ENCODE measurements at regions of chr15 and their contacts with region 1.

Region 1: GRCh38 chr15:40367686-40368611 is 9.9 kb downstream of the DISP2 start:
- DNase-seq: peak; percentile 92
- H3K4me3 Mint-ChIP-seq: peak overlapping the region; percentile 74
- H3K27ac Mint-ChIP-seq: peak overlapping the region; percentile 39
- H3K4me1 Mint-ChIP-seq: peaks cover 22% of the 10 kb centered on the region
- H3K27me3 Mint-ChIP-seq: peaks cover 60% of the 10 kb centered on the region

Region 2: GRCh38 chr15:40344631-40345120 is 23.3 kb before region 1 on chr15:
- CTCF ChIA-PET with region 1: interaction called, 21 read pairs
- DNase-seq: peak; percentile 84
- H3K4me3 Mint-ChIP-seq: no peak overlapping the region
- H3K27ac Mint-ChIP-seq: no peak overlapping the region
- H3K4me1 Mint-ChIP-seq: no peaks in the 10 kb centered on the region
- H3K27me3 Mint-ChIP-seq: peaks cover 4% of the 10 kb centered on the region

Region 3: GRCh38 chr15:40357723-40358470 is 10.1 kb before region 1 on chr15 and contains the start of gene DISP2:
- CTCF ChIA-PET with region 1: interaction called, 18 read pairs
- DNase-seq: peak; percentile 91
- H3K4me3 Mint-ChIP-seq: peak within 1 kb of the TSS; percentile 75
- H3K27ac Mint-ChIP-seq: no peak within 1 kb of the TSS
- H3K4me1 Mint-ChIP-seq: peaks cover 10% of the 10 kb centered on the region
- H3K27me3 Mint-ChIP-seq: peaks cover 61% of the 10 kb centered on the region

Region 4: DNA sequence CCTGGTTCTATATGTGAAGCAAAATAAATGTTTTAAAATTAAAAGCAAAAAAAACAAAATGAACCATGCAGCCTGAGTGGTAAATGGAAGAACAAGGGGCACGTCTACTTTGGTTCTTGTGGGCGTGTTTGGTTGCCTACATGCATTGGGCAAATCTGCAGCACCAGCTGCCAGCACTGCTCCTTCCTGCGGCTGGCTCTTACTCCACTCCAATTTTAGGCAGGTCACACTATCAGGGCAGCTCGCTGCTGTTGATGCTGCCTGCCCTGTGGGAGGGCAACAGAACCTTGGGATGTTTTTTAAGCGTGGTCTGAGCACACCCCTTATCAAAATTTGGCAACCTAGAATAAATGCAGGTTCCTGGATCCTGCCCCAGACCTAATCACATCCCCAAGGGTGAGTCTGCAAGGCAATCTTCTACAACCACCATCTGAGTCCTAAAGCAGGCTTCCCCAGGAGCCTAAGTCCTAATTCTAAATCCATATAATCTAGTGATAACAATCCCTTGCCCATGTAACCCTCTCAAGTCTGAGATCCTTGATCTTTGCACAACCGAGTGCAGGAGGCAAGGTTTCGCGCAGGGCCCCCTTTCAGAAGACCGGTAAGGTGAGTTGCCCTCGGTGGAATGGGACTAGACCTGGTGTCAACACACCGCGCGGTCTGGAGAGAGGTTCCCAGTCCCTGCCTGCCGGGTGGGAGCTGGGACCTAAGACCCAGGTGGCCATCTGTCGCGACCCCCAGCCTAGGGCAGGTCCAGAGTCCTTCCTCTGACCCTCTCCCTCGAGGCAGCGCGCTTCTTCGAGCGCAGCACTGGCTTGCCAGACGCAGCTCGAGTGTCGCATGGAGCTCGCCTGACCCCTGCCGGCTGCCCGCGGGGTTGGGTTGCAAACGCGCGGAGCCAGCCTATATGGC is 53.6 kb after region 1 on chr15:
- CTCF ChIA-PET with region 1: interaction called, 34 read pairs
- DNase-seq: peak; percentile 88
- H3K4me3 Mint-ChIP-seq: no peak overlapping the region
- H3K27ac Mint-ChIP-seq: no peak overlapping the region
- H3K4me1 Mint-ChIP-seq: no peaks in the 10 kb centered on the region
- H3K27me3 Mint-ChIP-seq: peaks cover 10% of the 10 kb centered on the region

Region 5: GRCh38 chr15:40684381-40684780 is 316.4 kb after region 1 on chr15:
- CTCF ChIA-PET with region 1: no interaction called
- DNase-seq: no peak
- H3K4me3 Mint-ChIP-seq: no peak overlapping the region
- H3K27ac Mint-ChIP-seq: no peak overlapping the region
- H3K4me1 Mint-ChIP-seq: no peaks in the 10 kb centered on the region
- H3K27me3 Mint-ChIP-seq: no peaks in the 10 kb centered on the region